ENCODE measurements at regions of chr15 and their contacts with region 1.

Region 1: DNA sequence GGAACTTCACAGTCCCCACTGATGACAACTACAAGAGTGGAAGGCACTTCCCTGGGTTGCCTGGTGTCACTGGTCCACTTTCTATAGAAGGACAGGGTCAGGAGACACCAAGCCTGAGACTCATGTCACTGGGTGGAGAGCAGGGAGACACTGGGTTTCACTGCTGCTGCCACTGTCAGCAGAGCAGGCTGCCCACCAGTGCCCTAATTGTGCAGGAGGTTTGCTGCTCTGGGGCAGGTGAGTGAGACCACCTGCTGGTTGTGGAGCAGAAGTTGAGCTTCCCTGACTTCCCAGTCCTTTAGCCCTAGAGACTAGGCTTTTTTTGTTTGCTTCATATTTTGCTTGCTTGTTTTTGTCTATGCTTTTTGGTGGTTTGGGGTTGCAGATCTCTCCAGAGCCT is 528.4 kb upstream of the RGMA start:
- DNase-seq: peak; percentile 3 to 46
- ATAC-seq: peak in 1 of 2 donors; percentile 81
- H3K4me3 ChIP-seq: no peak overlapping the region
- H3K27ac ChIP-seq: no peak overlapping the region
- H3K4me1 ChIP-seq: peaks cover 0 to 2% of the 10 kb centered on the region in 2 donors
- H3K27me3 ChIP-seq: no peaks in the 10 kb centered on the region
- CTCF ChIP-seq: peak in 4 of 5 experiments; percentile 24 to 45 (median 33)
- POLR2A ChIP-seq: no peak

Region 2: DNA sequence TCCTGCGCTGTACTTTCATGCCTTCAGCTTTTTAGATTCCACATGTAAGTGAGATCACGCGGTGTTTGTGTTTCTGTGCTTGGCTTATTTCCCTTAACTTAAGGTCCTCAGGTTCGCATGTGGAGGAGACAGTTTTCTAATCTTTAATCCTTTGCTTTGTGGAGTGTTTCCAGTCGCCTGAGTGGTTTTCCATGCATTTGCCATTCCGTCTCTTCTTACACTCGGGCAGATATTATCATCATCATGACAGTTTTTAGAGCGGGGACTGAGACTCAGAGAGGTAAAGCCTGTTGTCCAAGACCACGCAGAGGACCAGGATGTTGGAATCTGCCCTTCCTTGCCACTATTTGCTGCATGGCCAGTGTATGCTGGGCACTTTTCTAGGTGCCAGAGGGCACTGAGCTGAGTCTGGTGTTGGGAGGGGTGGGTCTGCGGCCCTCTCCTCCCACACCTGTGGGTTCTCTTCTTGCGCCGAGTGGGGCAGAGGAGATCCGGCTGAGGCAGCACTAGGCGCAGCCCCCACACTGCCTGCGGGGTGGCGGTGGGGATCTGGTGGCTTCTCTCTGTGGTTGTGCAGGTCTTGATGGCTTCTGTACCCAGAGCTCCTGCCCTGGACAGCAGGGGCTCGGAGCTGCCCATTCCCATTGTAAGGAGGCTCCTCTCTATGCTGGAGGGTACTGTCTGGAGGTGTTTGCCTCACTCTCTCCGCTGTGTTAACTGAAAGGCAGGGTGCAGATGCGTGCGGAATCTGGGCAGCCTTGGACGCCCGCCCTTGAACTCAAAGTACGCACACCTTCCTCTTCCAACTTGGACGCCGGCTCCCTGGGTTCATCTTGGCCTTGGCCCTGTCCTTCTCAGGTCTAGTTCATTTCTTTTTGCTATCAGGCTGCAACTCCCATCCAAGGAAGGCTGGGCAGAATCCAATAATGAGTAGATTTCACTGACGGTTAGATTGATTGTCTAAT is 372.5 kb before region 1 on chr15:
- in situ Hi-C with region 1: no loop called
- intact Hi-C with region 1: no loop called
- DNase-seq: no peak
- ATAC-seq: no peak
- H3K4me3 ChIP-seq: no peak overlapping the region
- H3K27ac ChIP-seq: no peak overlapping the region
- H3K4me1 ChIP-seq: no peaks in the 10 kb centered on the region
- H3K27me3 ChIP-seq: no peaks in the 10 kb centered on the region
- CTCF ChIP-seq: no peak
- POLR2A ChIP-seq: no peak

Region 3: DNA sequence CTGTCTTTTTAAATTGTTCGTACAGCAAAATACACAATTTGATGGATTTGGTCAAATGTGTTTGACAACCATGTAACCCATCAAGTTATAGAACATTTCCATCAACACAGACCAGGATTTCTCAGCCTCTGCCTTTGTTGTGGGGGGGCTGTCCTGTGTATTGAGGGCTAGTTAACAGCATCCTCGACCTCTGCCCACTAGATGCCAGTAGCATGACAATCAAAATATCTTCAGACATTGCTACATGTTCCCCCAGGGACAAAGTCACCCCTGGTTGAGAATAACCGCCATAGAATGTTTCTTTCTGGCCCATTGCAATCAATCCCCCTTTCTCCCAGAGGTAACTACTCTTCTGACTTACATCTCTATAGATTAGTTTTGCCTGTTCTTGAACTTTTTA is 218.3 kb before region 1 on chr15:
- in situ Hi-C with region 1: no loop called
- intact Hi-C with region 1: loop called (anchors 5 kb)
- DNase-seq: no peak
- ATAC-seq: peak; percentile 81 to 88
- H3K4me3 ChIP-seq: no peak overlapping the region
- H3K27ac ChIP-seq: no peak overlapping the region
- H3K4me1 ChIP-seq: no peaks in the 10 kb centered on the region
- H3K27me3 ChIP-seq: no peaks in the 10 kb centered on the region
- CTCF ChIP-seq: peak in 2 of 5 experiments; percentile 15 to 18
- POLR2A ChIP-seq: no peak

Measured in gastrocnemius medialis (tissue), 4 donors.